ENCODE measurements at regions of chr6 and their contacts with region 1.

Region 1: GRCh38 chr6:42532038-42532669 is 31.7 kb upstream of the UBR2 start:
- DNase-seq: peak in 1 of 5 donors; percentile 31
- H3K4me3 ChIP-seq: no peak overlapping the region
- H3K27ac ChIP-seq: no peak overlapping the region
- H3K4me1 ChIP-seq: no peaks in the 10 kb centered on the region
- H3K27me3 ChIP-seq: no peaks in the 10 kb centered on the region
- CTCF ChIP-seq: peak; percentile 66 to 82 (median 82)
- EP300 ChIP-seq: no peak
- POLR2A ChIP-seq: no peak

Region 2: GRCh38 chr6:42217519-42218367 is 314.4 kb before region 1 on chr6 and contains the start of gene MRPS10:
- intact Hi-C with region 1: loop called in 1 of 4 experiments (anchors 5 kb)
- DNase-seq: peak; percentile 89 to 93 (median 91)
- H3K4me3 ChIP-seq: peak within 1 kb of the TSS; percentile 73
- H3K27ac ChIP-seq: no peak within 1 kb of the TSS
- H3K4me1 ChIP-seq: peaks cover 6% of the 10 kb centered on the region
- H3K27me3 ChIP-seq: no peaks in the 10 kb centered on the region
- CTCF ChIP-seq: no peak
- EP300 ChIP-seq: no peak
- POLR2A ChIP-seq: peak; percentile 89
- total RNA-seq, gene MRPS10: 14.9 to 30.5 (median 24.6) TPM

Region 3: GRCh38 chr6:42251911-42252637 is 280.1 kb before region 1 on chr6:
- intact Hi-C with region 1: loop called in 2 of 4 experiments (anchors 10 kb)
- DNase-seq: peak; percentile 60 to 81 (median 70)
- H3K4me3 ChIP-seq: no peak overlapping the region
- H3K27ac ChIP-seq: no peak overlapping the region
- H3K4me1 ChIP-seq: peaks cover 5% of the 10 kb centered on the region
- H3K27me3 ChIP-seq: no peaks in the 10 kb centered on the region
- CTCF ChIP-seq: no peak
- EP300 ChIP-seq: no peak
- POLR2A ChIP-seq: no peak

Region 4: DNA sequence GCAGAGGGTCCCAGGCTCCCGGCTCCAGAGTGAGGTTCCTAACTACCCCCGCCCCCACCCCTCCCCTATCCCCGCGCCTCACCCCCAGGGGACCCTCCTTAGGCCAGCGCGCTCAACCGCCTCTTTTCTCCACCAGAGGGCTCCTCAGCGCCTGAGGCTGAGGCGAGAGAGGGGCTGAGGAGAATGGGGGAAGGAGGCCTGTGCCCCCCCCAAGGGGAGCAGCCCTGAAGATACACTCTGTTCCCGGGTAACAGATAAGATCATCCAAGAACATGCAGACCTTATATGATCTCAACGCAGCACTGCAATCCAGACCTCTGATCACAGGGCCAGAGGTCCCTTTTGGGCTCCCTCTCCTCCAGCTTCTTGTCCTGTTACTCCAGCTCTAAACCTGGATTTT is 271.2 kb before region 1 on chr6:
- intact Hi-C with region 1: loop called in 3 of 4 experiments (anchors 10 kb)
- DNase-seq: peak in 3 of 5 donors; percentile 41 to 67 (median 46)
- H3K4me3 ChIP-seq: no peak overlapping the region
- H3K27ac ChIP-seq: no peak overlapping the region
- H3K4me1 ChIP-seq: peaks cover 9% of the 10 kb centered on the region
- H3K27me3 ChIP-seq: no peaks in the 10 kb centered on the region
- CTCF ChIP-seq: no peak
- EP300 ChIP-seq: no peak
- POLR2A ChIP-seq: no peak

Region 5: DNA sequence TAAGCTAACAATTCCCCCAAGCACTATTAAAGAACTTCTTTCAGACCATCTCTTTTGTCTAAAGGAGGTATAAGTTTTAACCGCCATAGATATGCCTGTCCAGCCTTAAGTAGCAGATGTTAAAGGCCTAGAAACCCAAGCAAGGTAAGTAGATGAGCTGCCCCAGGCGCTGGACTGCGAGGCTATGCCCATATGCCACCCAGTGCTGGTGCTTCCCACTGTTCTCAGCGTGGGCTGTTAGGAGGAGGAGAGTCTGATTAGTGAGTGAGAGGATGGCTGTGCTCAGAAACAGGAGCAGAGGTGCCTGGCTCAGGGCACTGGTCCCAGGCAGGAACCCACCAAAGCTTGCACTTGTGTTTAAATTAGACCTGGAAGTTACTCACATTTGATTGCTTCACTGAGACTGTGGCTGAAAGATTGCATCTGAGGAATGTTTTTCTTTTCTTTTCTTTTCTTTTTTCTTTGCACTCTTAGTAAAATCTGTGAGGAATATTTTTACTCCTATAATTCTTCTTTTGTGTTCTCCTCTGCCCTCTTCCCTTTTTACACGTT is 158.1 kb after region 1 on chr6:
- intact Hi-C with region 1: no loop called
- DNase-seq: no peak
- H3K4me3 ChIP-seq: no peak overlapping the region
- H3K27ac ChIP-seq: no peak overlapping the region
- H3K4me1 ChIP-seq: no peaks in the 10 kb centered on the region
- H3K27me3 ChIP-seq: no peaks in the 10 kb centered on the region
- CTCF ChIP-seq: no peak
- EP300 ChIP-seq: no peak
- POLR2A ChIP-seq: no peak